ENCODE measurements at regions of chr1 and their contacts with region 1.

Region 1: GRCh38 chr1:158329733-158330132 is 1.6 kb downstream of the CD1B start:
- DNase-seq: no peak
- H3K4me3 Mint-ChIP-seq: no peak overlapping the region
- H3K27ac Mint-ChIP-seq: no peak overlapping the region
- H3K4me1 Mint-ChIP-seq: peaks cover 12% of the 10 kb centered on the region
- H3K27me3 Mint-ChIP-seq: peaks cover 4% of the 10 kb centered on the region

Region 2: DNA sequence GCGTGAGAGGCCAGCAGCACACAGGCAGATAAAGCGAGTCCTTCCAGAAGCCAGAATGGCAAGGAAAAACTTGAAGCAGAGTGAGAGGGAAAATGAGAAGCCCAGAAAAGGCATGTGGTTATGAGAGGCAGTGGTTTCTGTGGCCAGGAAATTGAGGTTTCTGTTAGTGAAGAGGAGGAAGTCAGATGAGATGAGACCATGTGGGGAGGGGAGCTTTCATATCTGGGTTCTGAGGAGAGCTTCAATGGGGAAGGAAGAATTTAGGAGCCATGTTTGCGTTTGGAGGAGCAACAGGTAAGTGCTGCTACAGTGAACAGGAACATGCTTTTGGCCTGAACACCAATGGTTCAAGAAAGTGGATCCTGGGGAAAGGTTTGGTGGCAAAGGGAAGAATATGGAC is 81.6 kb before region 1 on chr1:
- CTCF ChIA-PET with region 1: interaction called, 24 read pairs
- DNase-seq: peak; percentile 62
- H3K4me3 Mint-ChIP-seq: no peak overlapping the region
- H3K27ac Mint-ChIP-seq: no peak overlapping the region
- H3K4me1 Mint-ChIP-seq: peaks cover 21% of the 10 kb centered on the region
- H3K27me3 Mint-ChIP-seq: peaks cover 49% of the 10 kb centered on the region

Measured in activated naive CD4-positive, alpha-beta T cell treated with anti-CD3 and anti-CD28 coated beads, Interleukin-2, amount 10 ng/mL, durations not matched to agents 7 days and 5 days (primary cell).